ENCODE measurements at regions of chr1 and their contacts with region 1.

Region 1: GRCh38 chr1:26378088-26378878 is 5.7 kb upstream of the ZNF683 start:
- DNase-seq: peak; percentile 82
- H3K4me3 Mint-ChIP-seq: peak overlapping the region; percentile 69
- H3K27ac Mint-ChIP-seq: peak overlapping the region; percentile 76
- H3K4me1 Mint-ChIP-seq: peaks cover 66% of the 10 kb centered on the region
- H3K27me3 Mint-ChIP-seq: peaks cover 3% of the 10 kb centered on the region

Region 2: GRCh38 chr1:26284597-26285360 is 93.5 kb before region 1 on chr1:
- intact Hi-C with region 1: loop called (anchors 1 kb)
- DNase-seq: peak; percentile 88
- H3K4me3 Mint-ChIP-seq: peak overlapping the region; percentile 81
- H3K27ac Mint-ChIP-seq: peak overlapping the region; percentile 97
- H3K4me1 Mint-ChIP-seq: peaks cover 70% of the 10 kb centered on the region
- H3K27me3 Mint-ChIP-seq: no peaks in the 10 kb centered on the region

Region 3: DNA sequence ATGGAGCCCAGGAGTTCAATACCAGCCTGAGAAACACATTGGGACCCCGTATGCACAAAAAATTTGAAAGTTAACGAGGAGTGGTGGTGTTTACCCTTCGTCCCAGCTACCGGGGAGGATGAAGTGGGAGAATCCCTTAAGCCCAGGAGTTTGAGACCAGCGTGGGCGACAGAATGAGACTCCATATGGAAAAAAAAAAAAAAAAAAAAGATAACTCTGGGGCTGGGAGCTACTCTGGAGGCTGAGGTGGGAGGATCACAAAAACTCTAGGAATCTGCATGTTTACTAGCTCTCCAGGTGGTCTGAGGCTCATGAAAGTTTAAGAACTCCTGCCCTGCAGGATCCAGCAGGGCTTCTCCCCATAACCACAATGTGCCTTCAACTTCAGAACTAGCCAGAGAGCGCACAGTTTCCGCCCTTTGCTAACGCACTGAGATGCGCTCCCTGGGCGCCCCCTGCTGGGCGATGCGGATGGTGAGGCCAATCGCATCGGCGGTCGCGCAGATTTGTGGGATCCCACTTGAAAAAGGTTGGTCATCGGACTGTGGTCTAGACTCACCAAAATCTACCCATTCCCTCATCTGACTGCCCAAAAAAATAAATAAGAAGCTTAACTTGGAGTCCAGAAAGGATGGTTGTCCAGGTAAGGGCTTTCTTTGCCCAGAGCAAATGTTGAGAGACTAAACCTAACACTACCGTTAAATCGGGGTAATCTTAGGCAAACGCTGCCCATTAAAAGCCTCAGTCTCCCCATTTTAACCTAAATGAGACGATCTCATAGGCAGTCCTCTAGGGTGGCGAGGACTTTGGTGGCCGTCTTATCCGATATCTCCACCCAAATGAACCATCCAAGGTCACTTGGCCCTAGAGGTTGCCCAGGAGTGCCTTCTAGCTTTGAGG is 14.5 kb before region 1 on chr1:
- intact Hi-C with region 1: loop called (anchors 1 kb)
- DNase-seq: peak; percentile 74
- H3K4me3 Mint-ChIP-seq: no peak overlapping the region
- H3K27ac Mint-ChIP-seq: no peak overlapping the region
- H3K4me1 Mint-ChIP-seq: peaks cover 46% of the 10 kb centered on the region
- H3K27me3 Mint-ChIP-seq: peaks cover 39% of the 10 kb centered on the region

Region 4: DNA sequence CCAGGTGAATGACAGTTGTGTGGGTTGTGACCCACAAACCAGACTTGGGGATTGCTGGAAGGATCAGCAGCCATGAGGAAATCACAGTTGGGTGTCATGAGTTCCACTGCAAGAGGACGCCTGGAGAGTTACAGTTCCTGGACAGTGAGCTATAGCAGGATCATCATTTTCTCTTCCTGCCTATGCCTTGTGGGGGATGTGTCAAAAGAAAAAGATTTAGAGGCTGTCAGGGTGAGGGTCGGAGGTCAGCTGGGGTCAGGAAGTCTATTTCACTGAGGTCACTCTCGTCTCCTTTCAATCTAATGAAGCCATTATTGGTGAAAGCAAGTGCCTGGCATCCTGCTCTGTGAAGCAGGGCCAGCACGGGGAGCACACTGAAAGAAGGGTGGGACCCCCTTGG is 25.4 kb after region 1 on chr1:
- intact Hi-C with region 1: loop called (anchors 1 kb)
- DNase-seq: no peak
- H3K4me3 Mint-ChIP-seq: no peak overlapping the region
- H3K27ac Mint-ChIP-seq: no peak overlapping the region
- H3K4me1 Mint-ChIP-seq: peaks cover 2% of the 10 kb centered on the region
- H3K27me3 Mint-ChIP-seq: peaks cover 17% of the 10 kb centered on the region

Region 5: DNA sequence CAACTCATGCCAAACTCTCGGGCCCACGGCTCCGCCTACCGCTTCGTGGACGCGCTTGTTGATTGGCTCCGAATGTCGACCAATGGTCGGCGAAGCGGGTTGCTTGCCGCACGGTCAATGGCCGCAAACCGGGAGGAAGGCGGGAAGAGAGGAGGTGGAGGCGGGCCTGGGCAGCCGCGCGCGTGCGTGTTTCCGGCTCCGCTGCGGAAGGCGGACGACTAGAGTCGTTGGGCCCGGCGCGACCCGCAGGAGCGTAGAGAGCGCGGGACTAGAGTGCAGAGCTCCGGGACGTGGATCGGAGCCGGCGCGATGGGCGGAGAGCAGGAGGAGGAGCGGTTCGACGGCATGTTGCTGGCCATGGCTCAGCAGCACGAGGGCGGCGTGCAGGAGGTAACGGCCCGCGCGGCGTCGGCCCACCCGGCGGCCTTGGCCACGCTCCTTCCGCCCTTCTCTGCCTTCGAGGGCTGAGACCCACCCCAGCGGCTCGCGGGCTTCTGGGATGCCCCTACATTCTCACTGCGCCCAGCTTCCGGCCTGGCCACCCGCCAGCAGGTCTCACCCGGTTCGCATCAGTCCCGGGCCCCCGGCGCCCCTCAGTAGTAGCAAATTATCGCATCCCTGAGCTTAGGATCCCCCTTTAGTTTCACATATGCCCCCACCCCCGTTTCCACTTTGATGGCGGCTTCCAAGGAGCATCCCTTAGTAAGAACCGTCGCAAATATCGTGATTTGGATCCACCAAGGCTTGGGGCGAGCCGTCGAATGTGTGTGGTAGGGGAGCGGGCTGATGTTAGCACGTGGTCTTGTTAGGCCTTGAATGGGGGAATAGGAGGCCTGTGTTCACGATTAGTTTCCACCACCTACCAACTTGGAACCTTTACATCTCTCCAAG is 543.5 kb after region 1 on chr1 and contains the start of gene NUDC:
- intact Hi-C with region 1: no loop called
- DNase-seq: peak; percentile 97
- H3K4me3 Mint-ChIP-seq: peak within 1 kb of the TSS; percentile 97
- H3K27ac Mint-ChIP-seq: peak within 1 kb of the TSS; percentile 96
- H3K4me1 Mint-ChIP-seq: peaks cover 31% of the 10 kb centered on the region
- H3K27me3 Mint-ChIP-seq: peaks cover 2% of the 10 kb centered on the region
- total RNA-seq, gene NUDC: 151 and 152 TPM in 2 replicates